ENCODE measurements at regions of chr11 and their contacts with region 1.

Region 1: DNA sequence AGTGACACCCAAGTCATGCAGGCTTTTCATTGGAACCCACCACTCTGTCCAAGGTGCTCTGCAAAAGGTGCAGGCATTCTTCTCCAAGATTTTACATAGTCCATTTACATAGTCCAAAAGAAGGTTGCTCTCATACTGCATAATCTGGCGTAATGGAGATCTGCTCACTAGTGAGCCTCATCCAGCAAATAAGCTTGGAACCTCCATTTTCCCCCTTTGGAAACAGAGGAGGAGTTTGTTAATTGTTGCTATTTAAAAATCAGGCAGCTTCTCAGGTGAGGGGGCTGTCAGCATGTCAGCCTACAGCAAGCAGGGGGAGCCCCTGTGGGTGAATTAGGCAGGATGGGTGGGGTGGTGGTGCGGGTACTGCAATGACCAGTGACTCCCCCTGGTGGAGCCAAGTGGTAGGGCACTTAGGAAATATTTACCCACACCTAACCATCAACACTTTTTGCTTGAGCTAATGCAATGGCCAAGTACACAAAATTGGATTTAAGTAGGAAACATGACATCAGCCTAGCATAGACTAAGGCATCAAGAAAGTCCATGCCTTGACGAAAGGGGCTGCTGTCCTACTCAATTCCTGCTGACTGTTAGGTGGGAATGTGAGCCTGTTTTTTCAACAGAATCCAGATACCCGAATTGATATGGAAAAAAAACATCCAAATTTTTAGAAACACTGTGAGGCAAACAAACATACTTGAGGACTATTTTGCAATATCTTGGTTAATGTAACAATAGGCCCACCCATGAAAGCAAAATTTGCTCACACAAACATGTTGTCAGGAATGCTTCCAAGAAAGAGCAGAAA is 64.5 kb downstream of the AMBRA1 start:
- DNase-seq: peak; percentile 88
- CTCF ChIP-seq: peak; percentile 78

Region 2: DNA sequence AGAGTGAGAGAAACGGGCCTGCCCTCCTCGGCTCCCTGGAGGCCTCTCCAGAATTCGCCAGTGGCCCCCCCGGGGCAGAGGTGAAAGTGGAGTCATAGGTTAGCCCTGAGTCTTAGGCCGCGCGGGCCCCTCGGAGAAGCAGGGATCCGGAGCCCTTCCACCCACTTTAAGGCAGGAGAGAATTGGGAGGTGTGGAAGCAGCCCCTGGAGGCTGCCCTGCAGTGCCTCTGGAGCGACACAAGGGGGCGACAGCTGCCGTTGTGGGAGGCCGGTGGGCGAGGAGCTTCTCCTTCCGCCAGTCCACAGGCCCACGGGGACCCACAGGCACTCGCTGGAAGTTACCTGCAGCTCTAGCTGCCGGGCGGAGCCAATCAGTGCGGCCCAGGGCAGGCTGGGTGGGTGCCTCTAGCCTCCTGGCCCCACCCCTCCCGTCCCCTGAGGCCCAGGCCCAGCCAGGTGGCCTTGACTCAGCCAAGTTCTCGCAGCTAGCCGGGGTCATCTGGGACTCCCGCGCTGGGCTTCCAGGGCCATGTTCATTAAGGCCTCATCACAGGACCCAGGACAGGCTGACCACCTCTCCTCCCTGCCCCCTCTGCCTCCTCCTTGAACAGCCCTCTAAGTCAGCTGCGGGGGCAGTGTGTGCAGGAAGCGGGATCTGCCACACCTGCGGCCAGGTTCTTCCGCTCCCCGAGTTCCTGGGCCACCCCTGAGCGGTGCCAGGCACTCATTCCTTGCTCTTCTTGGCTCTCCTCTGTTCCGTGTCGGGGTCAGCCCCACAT is 177.0 kb before region 1 on chr11:
- CTCF ChIA-PET with region 1: interaction called, 13 read pairs
- POLR2A ChIA-PET with region 1: no interaction called
- DNase-seq: peak; percentile 69
- CTCF ChIP-seq: peak; percentile 87

Region 3: GRCh38 chr11:46392421-46393230 is 136.7 kb before region 1 on chr11:
- CTCF ChIA-PET with region 1: interaction called, 83 read pairs
- POLR2A ChIA-PET with region 1: no interaction called
- DNase-seq: peak; percentile 95
- CTCF ChIP-seq: no peak

Region 4: GRCh38 chr11:46445920-46446771 is 83.2 kb before region 1 on chr11:
- CTCF ChIA-PET with region 1: interaction called, 16 read pairs
- POLR2A ChIA-PET with region 1: no interaction called
- DNase-seq: no peak
- CTCF ChIP-seq: peak; percentile 38

Region 5: GRCh38 chr11:46489661-46490560 is 39.4 kb before region 1 on chr11:
- CTCF ChIA-PET with region 1: interaction called, 27 read pairs
- POLR2A ChIA-PET with region 1: no interaction called
- DNase-seq: peak; percentile 55
- CTCF ChIP-seq: peak; percentile 68

Region 6: GRCh38 chr11:46504817-46505613 is 24.3 kb before region 1 on chr11:
- CTCF ChIA-PET with region 1: interaction called, 19 read pairs
- POLR2A ChIA-PET with region 1: no interaction called
- DNase-seq: peak; percentile 39
- CTCF ChIP-seq: no peak

Region 7: GRCh38 chr11:46616998-46617675 is 87.8 kb after region 1 on chr11 and contains the starts of genes ATG13 and HARBI1:
- CTCF ChIA-PET with region 1: interaction called, 12 read pairs
- POLR2A ChIA-PET with region 1: no interaction called
- DNase-seq: peak; percentile 93
- CTCF ChIP-seq: no peak